Activated CD4-positive, alpha-beta memory T cell treated with anti-CD3 and anti-CD28 coated beads, Interleukin-2, amount 10 ng/mL, durations not matched to agents 7 days and 5 days (primary cell): ENCODE measurements at regions of chr2 and their contacts with region 1.

Region 1: DNA sequence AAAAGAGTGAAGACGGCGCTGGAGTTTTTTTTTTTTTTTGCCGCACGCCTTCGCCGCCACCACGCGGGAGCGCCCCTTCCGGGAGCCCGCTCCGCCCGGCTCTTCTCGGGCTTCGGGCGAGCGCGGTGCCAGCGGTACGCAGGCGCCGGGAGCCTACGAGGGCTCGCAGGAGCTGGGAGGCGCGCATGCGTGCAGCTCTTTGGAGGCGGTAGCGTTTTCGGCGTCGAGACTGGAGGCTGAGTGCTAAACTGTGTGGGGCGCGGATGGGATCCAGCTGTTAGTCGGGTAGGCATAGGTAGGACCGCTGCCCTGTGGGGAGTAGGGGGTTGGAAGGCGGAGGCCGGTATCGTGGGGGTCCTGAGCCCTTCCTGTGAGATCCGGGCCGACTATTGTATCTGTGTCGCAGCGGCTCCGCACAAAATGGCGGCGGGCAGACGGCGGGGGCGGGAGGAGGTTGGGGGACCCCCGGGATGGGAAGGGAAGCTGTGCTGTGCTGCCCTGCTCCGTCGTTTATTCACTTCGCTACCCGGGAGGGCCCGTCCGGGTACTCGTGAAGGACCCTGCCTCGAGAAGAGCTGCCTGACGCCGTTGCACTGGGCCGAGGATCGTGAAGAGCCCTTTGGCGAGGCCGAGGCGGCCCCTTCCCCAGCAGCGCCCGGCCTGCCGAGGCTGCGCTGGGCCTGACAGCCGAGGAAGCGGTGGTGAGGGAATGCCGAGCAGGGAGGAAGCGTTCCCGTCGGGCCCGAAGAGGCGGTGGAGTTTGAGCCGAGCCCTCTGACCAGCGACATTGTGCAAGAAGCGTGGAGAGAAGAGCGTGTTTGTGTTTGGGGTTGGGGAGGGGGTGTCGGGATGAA is at the start of gene ZNF638:
- DNase-seq: peak; percentile 92
- H3K4me3 Mint-ChIP-seq: peak within 1 kb of the TSS; percentile 100
- H3K27ac Mint-ChIP-seq: peak within 1 kb of the TSS; percentile 99
- H3K4me1 Mint-ChIP-seq: peaks cover 28% of the 10 kb centered on the region
- H3K27me3 Mint-ChIP-seq: peaks cover 3% of the 10 kb centered on the region
- total RNA-seq, gene ZNF638: 78.6 to 79.3 TPM

Region 2: DNA sequence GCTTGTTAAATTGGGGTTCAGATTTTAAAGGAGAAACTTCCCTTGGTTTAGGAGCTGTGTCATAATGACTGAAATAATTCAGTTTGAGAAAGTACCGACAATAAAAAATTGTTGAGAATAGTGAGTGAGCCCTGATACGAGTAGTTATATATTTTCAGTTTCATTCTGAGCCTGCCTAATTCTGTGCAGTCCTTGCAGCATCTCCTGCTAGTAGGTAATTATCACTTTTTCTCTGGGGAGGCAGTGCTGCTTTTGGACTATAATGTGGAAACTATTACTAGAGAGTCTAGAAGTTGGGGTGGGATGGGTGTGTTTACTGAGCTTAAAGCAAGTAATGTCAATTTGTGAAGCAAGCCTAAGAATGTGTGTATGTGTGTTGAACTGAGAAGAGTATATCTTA is 21.4 kb after region 1 on chr2:
- CTCF ChIA-PET with region 1: interaction called, 13 read pairs
- POLR2A ChIA-PET with region 1: interaction called, 6 read pairs
- DNase-seq: no peak
- H3K4me3 Mint-ChIP-seq: no peak overlapping the region
- H3K27ac Mint-ChIP-seq: peak overlapping the region; percentile 4
- H3K4me1 Mint-ChIP-seq: peaks cover 23% of the 10 kb centered on the region
- H3K27me3 Mint-ChIP-seq: no peaks in the 10 kb centered on the region

Region 3: GRCh38 chr2:71417300-71418202 is 85.7 kb after region 1 on chr2:
- CTCF ChIA-PET with region 1: interaction called, 12 read pairs
- POLR2A ChIA-PET with region 1: interaction called, 5 read pairs
- DNase-seq: no peak
- H3K4me3 Mint-ChIP-seq: peak overlapping the region; percentile 76
- H3K27ac Mint-ChIP-seq: peak overlapping the region; percentile 61
- H3K4me1 Mint-ChIP-seq: peaks cover 10% of the 10 kb centered on the region
- H3K27me3 Mint-ChIP-seq: no peaks in the 10 kb centered on the region

Region 4: GRCh38 chr2:71491551-71492511 is 160.0 kb after region 1 on chr2:
- CTCF ChIA-PET with region 1: no interaction called
- POLR2A ChIA-PET with region 1: no interaction called
- DNase-seq: no peak
- H3K4me3 Mint-ChIP-seq: no peak overlapping the region
- H3K27ac Mint-ChIP-seq: no peak overlapping the region
- H3K4me1 Mint-ChIP-seq: no peaks in the 10 kb centered on the region
- H3K27me3 Mint-ChIP-seq: peaks cover 11% of the 10 kb centered on the region